ENCODE measurements at regions of chr9 and their contacts with region 1.

Region 1: GRCh38 chr9:34332076-34332964 is 3.0 kb downstream of the NUDT2 start:
- DNase-seq: no peak
- H3K4me3 ChIP-seq: no peak overlapping the region
- H3K27ac ChIP-seq: no peak overlapping the region
- H3K4me1 ChIP-seq: no peaks in the 10 kb centered on the region
- H3K27me3 ChIP-seq: no peaks in the 10 kb centered on the region
- CTCF ChIP-seq: peak; percentile 14 to 54 (median 37)
- POLR2A ChIP-seq: no peak

Region 2: DNA sequence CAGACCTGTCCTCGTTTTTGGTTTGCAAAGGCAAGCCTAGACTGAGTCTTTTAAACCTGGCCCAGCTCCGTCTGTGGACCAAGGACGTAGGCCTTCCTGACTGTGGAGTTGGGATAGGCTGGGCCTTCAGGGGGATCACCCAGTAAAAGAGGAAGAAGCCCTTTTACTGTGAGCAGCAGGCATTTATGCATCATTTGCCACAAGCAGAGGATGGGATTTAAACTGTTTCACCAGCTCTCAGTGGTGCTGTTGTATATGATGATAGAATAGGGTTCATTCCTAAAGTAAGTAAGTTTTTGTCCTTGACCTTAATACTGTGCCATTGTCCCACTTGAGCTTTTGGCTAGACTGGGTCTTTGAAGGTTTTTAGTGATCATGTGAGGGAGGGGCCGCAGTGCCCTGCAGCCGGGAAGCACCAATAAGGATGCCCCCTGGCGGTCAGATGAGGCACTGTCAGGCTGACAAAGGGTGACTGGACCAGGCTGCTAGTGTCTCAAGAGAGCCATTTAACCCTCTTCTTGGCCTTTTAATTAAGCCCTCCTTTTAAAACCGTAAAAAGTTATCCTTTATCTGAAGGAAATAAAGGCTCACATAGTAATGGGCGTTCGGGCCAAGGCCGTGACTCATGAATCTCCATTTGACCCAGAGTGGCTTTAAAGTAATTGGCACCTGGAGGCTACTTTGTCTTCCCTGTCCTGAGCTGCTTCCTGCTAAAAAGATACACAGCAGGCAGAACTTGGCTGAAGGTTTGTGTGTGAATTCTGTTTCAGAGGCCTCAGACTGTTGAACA is 79.5 kb before region 1 on chr9:
- intact Hi-C with region 1: no loop called
- DNase-seq: peak; percentile 43
- H3K4me3 ChIP-seq: no peak overlapping the region
- H3K27ac ChIP-seq: peak overlapping the region; percentile 13 to 30
- H3K4me1 ChIP-seq: no peaks in the 10 kb centered on the region
- H3K27me3 ChIP-seq: no peaks in the 10 kb centered on the region
- CTCF ChIP-seq: peak; percentile 61 to 89 (median 84)
- POLR2A ChIP-seq: no peak

Region 3: DNA sequence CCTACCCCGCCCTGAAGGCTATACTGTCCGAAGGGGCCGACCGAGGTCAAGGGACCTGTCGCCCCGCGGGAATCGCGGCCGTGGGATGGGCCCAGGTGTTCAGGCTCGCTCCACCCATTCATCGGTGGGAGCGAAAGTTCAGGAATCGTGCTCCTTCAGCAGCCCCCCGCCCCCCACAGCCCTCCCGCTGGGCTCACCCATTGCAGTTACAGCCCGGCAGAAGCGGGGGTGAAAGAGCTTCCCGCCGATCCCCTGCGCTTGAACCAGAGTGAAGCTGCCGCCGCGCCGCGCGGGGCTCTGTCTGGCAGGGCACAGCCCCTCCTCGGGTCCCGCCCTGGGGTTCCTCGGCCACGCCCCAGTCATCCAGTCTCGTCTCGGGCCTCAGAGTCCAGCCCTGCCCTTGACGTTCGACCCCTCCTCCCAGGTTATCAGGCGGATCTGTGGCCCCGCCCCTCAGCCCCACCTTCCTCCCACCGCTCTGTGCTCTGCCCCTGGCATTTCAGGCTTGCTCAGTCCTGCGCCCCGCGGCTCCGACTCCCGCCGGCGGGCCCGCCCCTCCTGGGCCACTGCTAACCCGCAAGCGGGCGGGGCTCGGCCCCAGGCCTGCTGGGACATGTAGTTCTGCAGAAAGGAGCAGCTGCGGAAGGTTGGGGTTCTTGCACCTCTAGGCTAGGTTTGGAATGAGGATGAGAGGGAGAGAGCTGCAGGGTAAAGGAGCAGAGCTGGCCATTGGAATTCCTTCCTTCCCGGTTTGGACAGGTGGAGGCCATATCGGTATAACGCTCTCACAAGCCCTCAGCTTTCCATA is 44.5 kb after region 1 on chr9 and contains the start of gene MYORG:
- intact Hi-C with region 1: loop called (anchors 2 kb)
- DNase-seq: peak; percentile 93
- H3K4me3 ChIP-seq: peak within 1 kb of the TSS; percentile 59 to 65
- H3K27ac ChIP-seq: peak within 1 kb of the TSS; percentile 71 to 75
- H3K4me1 ChIP-seq: peaks cover 7% of the 10 kb centered on the region
- H3K27me3 ChIP-seq: no peaks in the 10 kb centered on the region
- CTCF ChIP-seq: peak in 2 of 4 experiments; percentile 6 to 22
- POLR2A ChIP-seq: peak; percentile 85
- total RNA-seq, gene MYORG: 3.4 to 9.0 TPM

Region 4: GRCh38 chr9:34493972-34494535 is 161.7 kb after region 1 on chr9:
- intact Hi-C with region 1: loop called (anchors 10 kb)
- DNase-seq: no peak
- H3K4me3 ChIP-seq: no peak overlapping the region
- H3K27ac ChIP-seq: no peak overlapping the region
- H3K4me1 ChIP-seq: no peaks in the 10 kb centered on the region
- H3K27me3 ChIP-seq: no peaks in the 10 kb centered on the region
- CTCF ChIP-seq: no peak
- POLR2A ChIP-seq: no peak

Region 5: GRCh38 chr9:34546834-34547827 is 214.8 kb after region 1 on chr9:
- intact Hi-C with region 1: loop called (anchors 2 kb)
- DNase-seq: peak; percentile 63
- H3K4me3 ChIP-seq: no peak overlapping the region
- H3K27ac ChIP-seq: no peak overlapping the region
- H3K4me1 ChIP-seq: peaks cover 6% of the 10 kb centered on the region
- H3K27me3 ChIP-seq: no peaks in the 10 kb centered on the region
- CTCF ChIP-seq: peak; percentile 64 to 89 (median 78)
- POLR2A ChIP-seq: no peak

Region 6: GRCh38 chr9:34603610-34604231 is 271.4 kb after region 1 on chr9:
- intact Hi-C with region 1: loop called (anchors 5 kb)
- DNase-seq: peak; percentile 83
- H3K4me3 ChIP-seq: no peak overlapping the region
- H3K27ac ChIP-seq: no peak overlapping the region
- H3K4me1 ChIP-seq: no peaks in the 10 kb centered on the region
- H3K27me3 ChIP-seq: no peaks in the 10 kb centered on the region
- CTCF ChIP-seq: peak; percentile 73 to 93 (median 89)
- POLR2A ChIP-seq: no peak